ENCODE measurements at regions of chr2 and their contacts with region 1.

Region 1: GRCh38 chr2:225820826-225821225 is 421.3 kb downstream of the NYAP2 start:
- DNase-seq: no peak
- H3K4me3 ChIP-seq: no peak overlapping the region
- H3K27ac ChIP-seq: no peak overlapping the region
- H3K4me1 ChIP-seq: no peaks in the 10 kb centered on the region
- H3K27me3 ChIP-seq: no peaks in the 10 kb centered on the region
- CTCF ChIP-seq: no peak

Region 2: GRCh38 chr2:226609366-226609765 is 788.5 kb after region 1 on chr2:
- CTCF ChIA-PET with region 1: no interaction called
- POLR2A ChIA-PET with region 1: interaction called, 12 read pairs
- intact Hi-C with region 1: no loop called
- DNase-seq: peak; percentile 18
- H3K4me3 ChIP-seq: no peak overlapping the region
- H3K27ac ChIP-seq: no peak overlapping the region
- H3K4me1 ChIP-seq: no peaks in the 10 kb centered on the region
- H3K27me3 ChIP-seq: no peaks in the 10 kb centered on the region
- CTCF ChIP-seq: no peak

Measured in A673 (cell line).